CD14-positive monocyte (primary cell): ENCODE measurements at regions of chr2 and their contacts with region 1.

Region 1: GRCh38 chr2:223929571-223930102 is 15.5 kb downstream of the WDFY1 start:
- DNase-seq: peak; percentile 32 to 61 (median 43)
- H3K4me3 ChIP-seq: peak overlapping the region in 1 of 3 experiments; percentile 26
- H3K4me3 Mint-ChIP-seq: peak overlapping the region; percentile 31 to 55
- H3K27ac ChIP-seq: peak overlapping the region in 1 of 2 donors; percentile 79
- H3K27ac Mint-ChIP-seq: peak overlapping the region; percentile 52 to 93 (median 85)
- H3K4me1 ChIP-seq: peaks cover 35 to 59% of the 10 kb centered on the region in 2 donors
- H3K4me1 Mint-ChIP-seq: peaks cover 73% of the 10 kb centered on the region
- H3K27me3 ChIP-seq: no peaks in the 10 kb centered on the region
- H3K27me3 Mint-ChIP-seq: peaks cover 0 to 1% (median 0%) of the 10 kb centered on the region in 3 donors
- CTCF ChIP-seq: no peak

Region 2: DNA sequence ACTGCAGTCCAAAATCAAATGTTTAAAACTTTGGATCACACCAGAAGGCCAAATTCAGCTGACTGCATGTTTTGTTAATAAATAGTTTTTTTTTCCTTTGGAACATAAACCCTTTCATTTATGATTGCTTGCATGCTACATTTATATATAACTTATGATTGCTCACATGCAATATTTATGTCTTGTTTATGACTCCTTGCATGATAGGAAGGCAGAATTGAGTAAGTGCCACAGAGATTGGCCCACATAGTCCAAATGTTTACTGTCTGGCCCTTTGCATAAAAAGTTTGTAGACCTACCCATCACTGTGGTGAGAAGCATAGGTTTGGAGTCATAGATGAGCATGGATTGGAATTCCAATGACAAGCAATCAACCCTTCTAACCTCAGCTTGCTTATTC is 15.3 kb before region 1 on chr2:
- intact Hi-C with region 1: loop called in 1 of 2 experiments (anchors 2 kb)
- DNase-seq: no peak
- H3K4me3 ChIP-seq: no peak overlapping the region
- H3K4me3 Mint-ChIP-seq: no peak overlapping the region
- H3K27ac ChIP-seq: peak overlapping the region in 1 of 2 donors; percentile 54
- H3K27ac Mint-ChIP-seq: peak overlapping the region in 1 of 7 donors; percentile 75
- H3K4me1 ChIP-seq: peaks cover 47 to 64% of the 10 kb centered on the region in 2 donors
- H3K4me1 Mint-ChIP-seq: peaks cover 63% of the 10 kb centered on the region
- H3K27me3 ChIP-seq: no peaks in the 10 kb centered on the region
- H3K27me3 Mint-ChIP-seq: peaks cover 0 to 5% (median 0%) of the 10 kb centered on the region in 3 donors
- CTCF ChIP-seq: no peak

Region 3: DNA sequence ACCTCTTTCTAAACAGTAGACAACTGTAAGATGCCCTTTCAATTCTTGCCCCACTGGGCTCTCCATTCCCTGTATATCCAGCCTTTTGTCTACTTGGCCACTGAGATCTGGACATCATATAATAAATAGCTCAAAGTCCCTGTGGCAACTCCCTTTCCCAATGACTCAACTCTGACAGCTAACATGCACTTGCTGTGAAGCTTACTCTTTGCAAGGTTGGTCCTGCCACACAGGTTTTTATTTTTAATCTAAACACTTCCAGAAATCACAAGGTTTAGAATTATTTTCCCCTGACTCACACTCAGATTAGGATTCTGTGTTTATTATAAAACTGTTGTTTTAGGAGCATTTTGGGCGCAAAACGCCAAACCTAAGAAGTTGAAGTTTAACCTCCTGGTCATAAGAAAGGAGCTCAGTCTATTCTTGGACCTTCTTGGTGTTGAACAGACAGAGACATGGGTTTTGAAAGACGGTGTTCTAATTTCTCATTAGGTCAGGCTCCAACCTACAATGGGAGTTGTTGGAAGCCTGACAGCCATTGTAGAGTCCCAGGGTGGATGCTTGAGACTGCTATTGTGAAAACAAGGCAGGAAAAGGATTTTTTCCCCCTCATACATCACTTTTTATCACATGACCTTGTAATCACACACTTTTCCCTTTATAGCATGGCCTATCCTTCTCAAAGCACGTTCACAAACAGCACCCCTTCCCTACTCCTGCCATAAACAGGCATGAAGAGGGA is 234.1 kb after region 1 on chr2:
- intact Hi-C with region 1: no loop called
- DNase-seq: no peak
- H3K4me3 ChIP-seq: no peak overlapping the region
- H3K4me3 Mint-ChIP-seq: no peak overlapping the region
- H3K27ac ChIP-seq: no peak overlapping the region
- H3K27ac Mint-ChIP-seq: no peak overlapping the region
- H3K4me1 ChIP-seq: no peaks in the 10 kb centered on the region
- H3K4me1 Mint-ChIP-seq: no peaks in the 10 kb centered on the region
- H3K27me3 ChIP-seq: no peaks in the 10 kb centered on the region
- H3K27me3 Mint-ChIP-seq: peaks cover 0 to 3% (median 2%) of the 10 kb centered on the region in 3 donors
- CTCF ChIP-seq: no peak